ENCODE measurements at regions of chr1 and their contacts with region 1.

Region 1: GRCh38 chr1:244835276-244836134 is at the start of gene COX20:
- DNase-seq: peak; percentile 81 to 96 (median 90)
- ATAC-seq: peak; percentile 64
- H3K4me3 ChIP-seq: peak within 1 kb of the TSS; percentile 74 to 84
- H3K4me3 Mint-ChIP-seq: peak within 1 kb of the TSS; percentile 94
- H3K27ac ChIP-seq: peak within 1 kb of the TSS; percentile 88 to 98
- H3K27ac Mint-ChIP-seq: peak within 1 kb of the TSS; percentile 99
- H3K4me1 ChIP-seq: peaks cover 34% of the 10 kb centered on the region
- H3K4me1 Mint-ChIP-seq: peaks cover 48% of the 10 kb centered on the region
- H3K27me3 ChIP-seq: no peaks in the 10 kb centered on the region
- H3K27me3 Mint-ChIP-seq: no peaks in the 10 kb centered on the region
- CTCF ChIP-seq: no peak
- total RNA-seq, gene COX20: 17.4 to 17.7 TPM

Region 2: DNA sequence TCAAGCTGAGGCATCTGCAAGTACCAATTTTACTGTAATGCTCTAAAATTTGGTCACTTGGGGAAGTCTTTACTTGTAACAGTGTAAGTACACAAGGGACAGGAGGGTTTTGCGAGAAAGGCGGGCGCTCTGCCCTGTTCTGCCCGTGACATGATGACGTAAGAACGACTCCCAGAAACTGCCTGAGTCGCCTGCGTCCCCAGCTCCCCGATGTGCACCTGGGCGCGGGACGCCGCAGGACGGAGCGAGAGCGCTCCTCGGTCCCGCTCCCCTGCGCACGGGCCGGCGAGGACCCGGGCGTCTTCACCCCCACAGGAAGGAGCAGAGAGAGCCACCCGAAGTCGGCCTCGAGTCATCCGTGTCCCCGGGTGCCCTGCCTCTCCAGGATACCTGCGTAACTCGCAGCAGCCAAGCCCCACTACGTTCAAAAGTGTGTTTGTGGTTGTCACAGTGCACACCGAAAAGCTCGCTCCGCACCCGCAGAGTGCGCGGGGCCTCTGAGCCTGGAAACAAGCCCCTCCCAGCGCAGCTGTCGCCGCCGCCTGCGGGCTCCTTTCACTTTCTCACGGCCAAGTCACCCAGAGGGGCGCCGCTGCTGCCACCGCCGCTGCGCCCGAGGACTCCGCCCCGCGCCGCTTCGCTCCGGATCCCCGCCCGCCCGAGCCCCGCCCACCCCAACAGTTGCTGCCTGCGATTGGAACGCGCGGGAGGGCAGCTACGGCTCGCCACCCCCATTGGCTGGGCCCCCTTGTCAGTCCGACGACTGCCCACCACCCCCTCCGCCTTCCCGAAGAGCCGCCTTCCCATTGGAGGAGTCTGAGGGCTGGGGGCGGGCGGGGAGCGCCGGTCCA is 787.7 kb before region 1 on chr1:
- CTCF ChIA-PET with region 1: no interaction called
- POLR2A ChIA-PET with region 1: interaction called, 3 read pairs
- intact Hi-C with region 1: loop called in 1 of 2 experiments (anchors 10 kb)
- DNase-seq: peak; percentile 95 to 99 (median 97)
- ATAC-seq: peak; percentile 72
- H3K4me3 ChIP-seq: peak overlapping the region; percentile 83
- H3K4me3 Mint-ChIP-seq: peak overlapping the region; percentile 89
- H3K27ac ChIP-seq: peak overlapping the region; percentile 95 to 97
- H3K27ac Mint-ChIP-seq: peak overlapping the region; percentile 98
- H3K4me1 ChIP-seq: peaks cover 40% of the 10 kb centered on the region
- H3K4me1 Mint-ChIP-seq: peaks cover 26% of the 10 kb centered on the region
- H3K27me3 ChIP-seq: no peaks in the 10 kb centered on the region
- H3K27me3 Mint-ChIP-seq: no peaks in the 10 kb centered on the region
- CTCF ChIP-seq: no peak

Region 3: DNA sequence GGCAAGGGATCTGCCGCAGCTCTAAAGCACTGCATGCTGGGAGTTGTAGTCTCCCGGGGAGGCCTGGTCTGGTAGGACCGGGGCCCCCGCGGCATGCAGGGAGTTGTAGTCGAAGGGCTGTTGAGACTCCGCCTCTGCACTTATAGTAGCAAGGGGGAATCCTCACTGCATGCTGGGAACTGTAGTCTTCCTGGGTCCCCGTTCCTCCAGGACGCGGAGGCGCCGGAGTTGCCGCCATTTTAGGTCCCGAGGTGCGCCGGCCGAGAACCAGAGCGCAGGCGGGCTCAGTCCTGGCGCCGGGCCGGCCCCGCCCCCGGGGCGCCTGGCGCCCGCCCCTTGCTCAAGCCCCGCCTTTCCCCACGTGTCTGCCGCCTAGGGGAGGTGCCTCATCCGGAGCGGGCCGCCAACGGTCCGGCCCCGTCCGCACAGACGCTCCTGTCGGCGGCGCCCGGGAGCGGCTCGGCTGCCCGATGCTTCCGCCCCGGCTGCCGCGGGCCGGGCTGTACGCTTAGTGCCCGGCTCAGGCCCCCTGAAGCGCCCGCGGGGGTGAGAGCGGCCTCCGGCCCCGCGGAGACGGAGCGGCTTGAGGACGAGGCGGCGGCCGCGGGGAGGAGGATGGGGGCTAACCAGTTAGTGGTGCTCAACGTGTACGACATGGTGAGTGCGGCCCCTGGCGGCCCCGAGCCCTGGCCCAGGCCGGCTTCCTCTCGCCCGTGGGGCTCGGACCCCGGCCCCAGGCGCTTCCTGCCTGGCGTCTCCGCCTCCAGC is 182.6 kb before region 1 on chr1 and contains the start of gene DESI2:
- CTCF ChIA-PET with region 1: no interaction called
- POLR2A ChIA-PET with region 1: interaction called, 16 read pairs
- intact Hi-C with region 1: loop called (anchors 1 kb)
- DNase-seq: peak; percentile 95 to 100 (median 97)
- ATAC-seq: peak; percentile 92
- H3K4me3 ChIP-seq: peak within 1 kb of the TSS; percentile 67 to 95
- H3K4me3 Mint-ChIP-seq: no peak within 1 kb of the TSS
- H3K27ac ChIP-seq: peak within 1 kb of the TSS; percentile 68 to 73
- H3K27ac Mint-ChIP-seq: peak within 1 kb of the TSS; percentile 86
- H3K4me1 ChIP-seq: peaks cover 22% of the 10 kb centered on the region
- H3K4me1 Mint-ChIP-seq: peaks cover 26% of the 10 kb centered on the region
- H3K27me3 ChIP-seq: no peaks in the 10 kb centered on the region
- H3K27me3 Mint-ChIP-seq: no peaks in the 10 kb centered on the region
- CTCF ChIP-seq: peak; percentile 39
- total RNA-seq, gene DESI2: 14.5 to 16.2 TPM

Region 4: GRCh38 chr1:244788493-244789275 is 46.8 kb before region 1 on chr1:
- CTCF ChIA-PET with region 1: no interaction called
- POLR2A ChIA-PET with region 1: no interaction called
- intact Hi-C with region 1: no loop called
- DNase-seq: no peak
- ATAC-seq: no peak
- H3K4me3 ChIP-seq: no peak overlapping the region
- H3K4me3 Mint-ChIP-seq: no peak overlapping the region
- H3K27ac ChIP-seq: no peak overlapping the region
- H3K27ac Mint-ChIP-seq: no peak overlapping the region
- H3K4me1 ChIP-seq: no peaks in the 10 kb centered on the region
- H3K4me1 Mint-ChIP-seq: no peaks in the 10 kb centered on the region
- H3K27me3 ChIP-seq: no peaks in the 10 kb centered on the region
- H3K27me3 Mint-ChIP-seq: no peaks in the 10 kb centered on the region
- CTCF ChIP-seq: no peak

Region 5: DNA sequence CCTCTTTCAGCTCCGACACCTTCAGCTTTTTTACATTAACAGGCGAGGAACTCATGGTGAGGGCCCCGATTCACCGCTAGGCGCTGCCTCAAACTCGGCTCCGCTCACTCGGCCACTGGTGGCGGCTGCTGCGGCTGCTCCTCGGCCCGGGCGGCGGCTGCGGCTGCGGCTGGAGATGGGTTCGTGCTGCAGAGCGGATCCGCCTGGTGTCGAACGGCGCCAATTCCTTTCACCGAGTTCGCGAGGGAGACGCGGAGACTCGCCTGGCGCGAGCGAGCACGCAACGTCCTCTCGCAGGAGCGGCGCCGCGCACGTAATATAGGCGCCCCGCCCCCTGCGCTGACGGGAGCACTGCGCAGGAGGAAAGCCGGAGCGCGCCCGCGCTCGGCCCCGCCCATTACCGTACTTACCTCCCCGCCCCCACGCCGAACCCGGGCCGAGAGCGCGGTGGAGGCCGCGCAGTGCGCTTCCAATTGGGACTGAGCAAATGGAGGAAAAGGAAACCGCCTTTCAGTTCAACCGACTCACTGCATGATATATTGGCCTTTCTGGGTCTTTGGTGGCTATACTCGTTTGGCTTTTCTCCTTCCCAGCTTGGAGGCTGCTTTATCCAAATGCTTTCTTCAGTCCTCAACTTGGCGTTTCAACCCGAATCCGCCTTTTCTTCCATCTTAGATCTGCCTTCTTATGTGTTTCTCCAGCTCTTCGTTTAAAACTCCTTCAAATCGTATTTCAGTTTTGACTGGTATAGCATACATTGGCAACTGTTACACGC is 28.9 kb after region 1 on chr1 and contains the start of gene HNRNPU:
- CTCF ChIA-PET with region 1: interaction called, 50 read pairs
- POLR2A ChIA-PET with region 1: interaction called, 762 read pairs
- intact Hi-C with region 1: loop called (anchors 1 kb)
- DNase-seq: peak; percentile 91 to 99 (median 96)
- ATAC-seq: peak; percentile 63
- H3K4me3 ChIP-seq: peak within 1 kb of the TSS; percentile 85 to 88
- H3K4me3 Mint-ChIP-seq: peak within 1 kb of the TSS; percentile 94
- H3K27ac ChIP-seq: peak within 1 kb of the TSS; percentile 91 to 94
- H3K27ac Mint-ChIP-seq: peak within 1 kb of the TSS; percentile 98
- H3K4me1 ChIP-seq: peaks cover 34% of the 10 kb centered on the region
- H3K4me1 Mint-ChIP-seq: peaks cover 45% of the 10 kb centered on the region
- H3K27me3 ChIP-seq: no peaks in the 10 kb centered on the region
- H3K27me3 Mint-ChIP-seq: no peaks in the 10 kb centered on the region
- CTCF ChIP-seq: no peak
- total RNA-seq, gene HNRNPU: 411 to 415 TPM

Region 6: DNA sequence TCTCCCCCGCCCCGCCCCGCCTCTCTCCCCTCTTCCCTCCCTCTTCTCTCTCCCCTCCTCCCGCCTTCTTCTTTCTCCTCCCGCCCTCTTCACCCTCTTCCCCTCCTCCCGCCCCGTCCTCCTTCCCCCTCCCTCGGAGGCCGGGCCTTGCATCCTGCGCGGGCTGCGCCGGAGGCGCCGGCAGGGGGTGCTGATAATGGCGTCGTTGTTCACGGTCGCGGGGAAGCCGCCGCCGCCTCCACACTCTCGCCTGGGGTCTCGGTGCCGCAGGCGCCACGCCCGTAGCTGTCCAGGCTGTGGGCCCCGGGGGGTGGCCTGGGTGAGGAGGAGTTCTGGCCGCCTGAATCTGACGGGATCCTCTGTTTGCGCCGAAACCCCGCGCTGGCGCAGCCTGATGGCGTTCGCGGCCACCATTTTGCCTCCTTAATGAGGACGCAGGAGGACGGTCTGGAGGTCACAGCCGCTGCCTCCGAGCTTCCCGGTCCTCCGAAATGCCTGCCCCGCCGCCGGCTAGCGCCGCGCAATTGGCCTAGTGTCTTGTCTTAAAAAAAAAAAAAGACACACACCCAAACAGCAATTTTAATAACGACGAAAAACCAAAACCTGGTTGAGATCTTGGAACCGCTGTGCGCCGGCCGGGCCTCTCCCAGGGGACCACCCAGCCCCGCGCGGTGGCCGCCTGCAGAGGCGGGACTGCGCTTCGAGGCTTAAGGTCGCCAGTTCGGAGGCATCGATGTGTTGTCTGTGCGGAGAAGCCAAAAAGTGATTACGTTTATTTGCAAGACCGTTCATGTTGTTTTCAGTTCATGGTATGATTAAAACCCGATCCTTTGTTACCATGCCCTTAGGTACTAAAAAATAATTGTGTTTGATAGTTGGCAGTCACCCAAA is 135.4 kb after region 1 on chr1:
- CTCF ChIA-PET with region 1: interaction called, 4 read pairs
- POLR2A ChIA-PET with region 1: interaction called, 127 read pairs
- intact Hi-C with region 1: loop called (anchors 1 kb)
- DNase-seq: peak; percentile 86 to 97 (median 93)
- ATAC-seq: peak; percentile 80
- H3K4me3 ChIP-seq: peak overlapping the region; percentile 68 to 70
- H3K4me3 Mint-ChIP-seq: peak overlapping the region; percentile 97
- H3K27ac ChIP-seq: peak overlapping the region; percentile 99 to 100
- H3K27ac Mint-ChIP-seq: peak overlapping the region; percentile 98
- H3K4me1 ChIP-seq: peaks cover 5% of the 10 kb centered on the region
- H3K4me1 Mint-ChIP-seq: peaks cover 19% of the 10 kb centered on the region
- H3K27me3 ChIP-seq: no peaks in the 10 kb centered on the region
- H3K27me3 Mint-ChIP-seq: no peaks in the 10 kb centered on the region
- CTCF ChIP-seq: peak; percentile 54

Measured in CD8-positive, alpha-beta T cell (primary cell).